ENCODE measurements at regions of chr14 and their contacts with region 1.

Region 1: DNA sequence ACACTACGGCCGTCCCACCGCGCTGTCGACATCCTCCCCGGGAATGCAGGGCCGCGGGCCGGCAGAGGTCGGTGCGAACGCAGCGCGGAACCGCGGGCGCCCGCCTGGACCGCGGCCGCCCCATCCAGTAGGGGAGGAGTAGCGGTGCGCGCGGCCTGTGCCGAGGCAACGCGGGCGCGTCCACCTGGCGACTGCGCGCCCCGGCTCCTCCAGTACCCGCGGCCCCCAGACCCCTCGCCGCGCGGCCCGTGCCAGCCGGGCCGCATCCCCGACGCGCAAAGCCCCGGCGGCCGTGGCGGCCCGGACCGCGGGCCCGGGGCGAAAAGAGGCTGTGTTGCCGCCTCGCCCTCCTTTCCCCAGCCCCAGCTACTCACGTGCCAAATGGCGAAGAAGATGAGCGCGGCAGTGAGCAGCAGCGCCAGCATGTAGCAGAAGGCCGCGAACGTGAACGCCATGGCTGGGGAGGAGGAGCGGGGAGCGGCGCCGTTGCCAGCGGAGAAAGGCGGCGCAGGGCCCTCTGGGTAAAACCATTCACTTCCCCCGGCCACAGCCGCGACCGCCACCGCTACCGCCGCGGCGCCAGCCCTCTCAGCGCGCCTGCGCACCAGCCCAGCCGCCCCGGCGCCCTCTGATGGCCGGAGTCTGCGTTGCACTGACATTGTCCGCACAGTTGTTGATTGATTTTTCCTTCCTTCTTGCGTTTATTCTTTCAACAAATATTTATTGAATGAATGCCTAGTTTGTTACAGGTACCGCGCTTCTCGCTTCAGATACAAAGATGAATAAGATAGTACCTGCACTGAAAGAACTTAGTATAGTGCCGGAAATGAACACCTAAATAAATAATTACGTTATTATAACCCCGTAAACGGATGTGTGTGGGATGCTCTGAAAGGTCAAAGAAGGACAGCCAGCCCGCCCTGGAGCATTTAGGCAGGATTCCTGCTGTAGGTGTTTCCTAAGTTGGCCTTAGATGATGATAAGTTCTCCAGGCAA is at the start of gene CNIH1:
- DNase-seq: peak; percentile 85 to 97 (median 92)
- ATAC-seq: peak; percentile 93
- H3K4me3 ChIP-seq: peak within 1 kb of the TSS; percentile 66
- H3K4me3 Mint-ChIP-seq: peak within 1 kb of the TSS; percentile 90
- H3K27ac ChIP-seq: peak within 1 kb of the TSS; percentile 41 to 75
- H3K27ac Mint-ChIP-seq: peak within 1 kb of the TSS; percentile 86
- H3K4me1 ChIP-seq: peaks cover 24% of the 10 kb centered on the region
- H3K4me1 Mint-ChIP-seq: peaks cover 44% of the 10 kb centered on the region
- H3K27me3 ChIP-seq: no peaks in the 10 kb centered on the region
- H3K27me3 Mint-ChIP-seq: no peaks in the 10 kb centered on the region
- CTCF ChIP-seq: peak; percentile 98
- total RNA-seq, gene CNIH1: 55.9 TPM

Region 2: DNA sequence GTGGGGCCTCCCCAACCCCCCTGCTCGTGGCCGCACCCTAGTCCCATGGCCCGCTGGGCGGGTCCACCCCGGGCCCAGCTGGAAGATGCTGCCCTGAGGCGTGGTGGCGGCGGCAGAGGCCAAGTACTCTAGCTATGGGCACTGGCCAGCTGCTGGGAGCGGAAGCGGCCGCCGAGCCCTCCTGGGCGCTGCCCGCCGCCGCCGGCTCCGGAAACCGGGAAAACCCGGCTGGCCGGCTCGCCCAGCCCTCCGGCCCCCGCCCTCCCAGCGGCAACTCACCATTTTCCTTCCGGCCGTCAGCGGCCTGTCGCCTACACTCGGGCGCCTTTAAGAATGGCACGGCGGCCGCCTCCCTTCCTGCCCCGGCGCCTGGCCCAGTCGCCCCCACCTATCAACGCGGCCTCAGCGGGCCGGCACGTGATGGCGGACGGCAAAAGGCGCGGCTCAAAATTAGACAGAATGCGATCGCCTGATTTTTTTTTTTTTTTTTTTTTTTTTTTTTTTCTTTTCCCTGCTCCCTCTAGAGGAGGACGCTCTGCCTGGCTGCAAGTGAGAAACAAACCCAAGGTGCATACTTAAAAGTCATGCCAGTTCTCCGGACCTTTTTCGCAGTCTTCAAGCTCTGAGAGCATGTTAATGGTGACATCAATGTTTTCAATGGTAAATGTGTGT is 47.6 kb after region 1 on chr14 and contains the start of gene GMFB:
- CTCF ChIA-PET with region 1: interaction called, 8 read pairs
- POLR2A ChIA-PET with region 1: interaction called, 6 read pairs
- intact Hi-C with region 1: loop called (anchors 2 to 5 kb)
- DNase-seq: peak; percentile 79 to 95 (median 87)
- ATAC-seq: peak; percentile 95
- H3K4me3 ChIP-seq: peak within 1 kb of the TSS; percentile 95
- H3K4me3 Mint-ChIP-seq: peak within 1 kb of the TSS; percentile 99
- H3K27ac ChIP-seq: peak within 1 kb of the TSS; percentile 68 to 84
- H3K27ac Mint-ChIP-seq: peak within 1 kb of the TSS; percentile 86
- H3K4me1 ChIP-seq: peaks cover 32% of the 10 kb centered on the region
- H3K4me1 Mint-ChIP-seq: peaks cover 70% of the 10 kb centered on the region
- H3K27me3 ChIP-seq: no peaks in the 10 kb centered on the region
- H3K27me3 Mint-ChIP-seq: no peaks in the 10 kb centered on the region
- CTCF ChIP-seq: no peak
- total RNA-seq, gene GMFB: 39.5 to 43.5 TPM

Region 3: DNA sequence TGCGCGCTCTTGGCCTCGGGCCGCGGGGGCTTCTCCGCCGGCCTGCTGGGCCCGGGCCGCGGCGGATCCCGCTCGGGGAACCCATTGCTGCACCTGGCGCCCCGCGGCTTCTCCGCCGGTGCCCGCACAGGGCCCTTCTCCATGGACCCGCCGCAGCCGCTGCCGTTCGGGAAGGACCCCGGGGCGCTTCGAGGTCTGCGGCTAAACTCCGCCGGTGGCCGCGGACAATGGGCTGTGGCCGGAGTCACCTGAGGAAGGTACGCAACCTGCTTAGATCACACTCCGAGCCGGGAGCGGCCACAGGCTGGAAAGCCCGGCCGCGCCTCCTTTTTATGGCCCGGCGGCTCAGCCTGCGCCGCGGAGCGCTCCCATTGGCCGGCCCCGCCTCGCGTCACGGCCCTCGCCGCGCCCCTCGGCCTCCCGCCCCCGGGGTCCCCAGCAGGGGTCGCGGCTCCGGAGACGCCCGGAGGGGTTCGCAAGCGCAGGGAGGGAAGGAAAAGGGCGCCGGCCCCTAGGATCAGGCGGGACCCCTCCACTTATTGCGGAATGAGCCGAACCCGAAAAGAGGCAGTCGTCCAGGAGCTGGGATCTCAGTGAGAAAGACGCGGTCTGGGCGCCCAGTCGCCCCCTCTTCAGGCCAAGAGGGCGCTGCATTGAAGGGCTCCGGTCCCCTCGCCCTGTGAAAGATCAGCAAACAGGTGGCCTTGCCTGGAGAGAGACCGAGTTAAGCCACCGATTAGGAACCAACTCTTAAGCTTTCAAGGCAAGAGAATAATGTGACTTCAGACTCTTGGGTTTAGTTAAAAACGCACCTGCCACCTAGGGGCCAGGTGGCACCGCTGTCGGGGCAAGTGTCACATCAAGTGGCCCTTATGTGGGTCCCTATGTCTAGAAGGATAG is 461.6 kb after region 1 on chr14 and contains the start of gene GCH1:
- CTCF ChIA-PET with region 1: no interaction called
- POLR2A ChIA-PET with region 1: no interaction called
- intact Hi-C with region 1: loop called in 1 of 2 experiments (anchors 2 kb)
- DNase-seq: peak; percentile 42 to 91 (median 65)
- ATAC-seq: peak; percentile 69
- H3K4me3 ChIP-seq: peak within 1 kb of the TSS; percentile 97
- H3K4me3 Mint-ChIP-seq: peak within 1 kb of the TSS; percentile 97
- H3K27ac ChIP-seq: peak within 1 kb of the TSS; percentile 92 to 95
- H3K27ac Mint-ChIP-seq: peak within 1 kb of the TSS; percentile 85
- H3K4me1 ChIP-seq: peaks cover 35% of the 10 kb centered on the region
- H3K4me1 Mint-ChIP-seq: peaks cover 24% of the 10 kb centered on the region
- H3K27me3 ChIP-seq: no peaks in the 10 kb centered on the region
- H3K27me3 Mint-ChIP-seq: no peaks in the 10 kb centered on the region
- CTCF ChIP-seq: peak; percentile 80
- total RNA-seq, gene GCH1: 18.4 to 20.4 TPM

Measured in CD4-positive, alpha-beta T cell (primary cell).